ENCODE measurements at regions of chr11 and their contacts with region 1.

Region 1: DNA sequence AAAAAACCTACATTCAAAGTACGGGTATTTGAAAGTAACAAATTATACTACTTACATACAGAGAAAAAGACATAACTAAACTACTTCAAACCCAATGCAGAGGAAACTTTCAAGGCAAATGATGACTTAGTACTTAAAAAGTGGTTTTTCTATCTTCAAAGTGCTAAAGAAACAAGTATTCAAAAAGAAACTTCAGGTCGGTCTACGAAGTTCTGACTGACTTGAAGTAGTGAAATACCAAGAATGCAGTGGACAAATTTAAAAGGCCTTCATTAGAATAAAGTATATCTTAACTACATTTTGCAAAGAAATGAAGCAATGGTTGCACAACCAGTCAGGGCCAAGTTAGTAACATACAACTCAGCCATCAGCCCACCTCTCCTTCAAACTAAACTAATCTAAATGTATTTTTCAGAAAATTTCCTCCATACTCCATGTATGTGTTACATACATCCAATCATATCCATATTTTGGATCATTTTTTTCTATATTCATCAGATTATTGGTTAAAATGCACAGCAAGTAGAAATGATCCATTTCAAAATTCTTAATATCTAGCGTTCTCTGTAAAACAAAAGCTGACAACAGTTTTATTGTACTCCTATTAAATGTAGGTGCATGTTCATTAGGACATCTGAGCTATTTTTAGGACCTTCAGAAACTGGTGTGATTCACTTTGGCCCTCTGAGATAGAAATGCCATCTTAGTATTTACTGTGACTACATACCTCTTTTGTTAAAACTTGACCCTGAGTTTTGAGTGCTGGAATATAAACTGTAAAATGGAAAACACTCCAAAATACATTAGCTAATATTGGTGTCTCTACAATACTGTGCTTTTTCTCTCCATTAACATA is 49.9 kb downstream of the BIRC2 start:
- DNase-seq: no peak
- H3K4me3 Mint-ChIP-seq: no peak overlapping the region
- H3K27ac Mint-ChIP-seq: peak overlapping the region; percentile 69
- H3K4me1 Mint-ChIP-seq: peaks cover 32% of the 10 kb centered on the region
- H3K27me3 Mint-ChIP-seq: no peaks in the 10 kb centered on the region

Region 2: GRCh38 chr11:102323542-102324251 is 73.2 kb before region 1 on chr11:
- intact Hi-C with region 1: loop called (anchors 2 kb)
- DNase-seq: no peak
- H3K4me3 Mint-ChIP-seq: no peak overlapping the region
- H3K27ac Mint-ChIP-seq: no peak overlapping the region
- H3K4me1 Mint-ChIP-seq: peaks cover 47% of the 10 kb centered on the region
- H3K27me3 Mint-ChIP-seq: no peaks in the 10 kb centered on the region

Region 3: GRCh38 chr11:102346748-102347461 is 50.0 kb before region 1 on chr11 and contains the start of gene BIRC2:
- intact Hi-C with region 1: loop called (anchors 2 kb)
- DNase-seq: peak; percentile 99
- H3K4me3 Mint-ChIP-seq: peak within 1 kb of the TSS; percentile 99
- H3K27ac Mint-ChIP-seq: peak within 1 kb of the TSS; percentile 99
- H3K4me1 Mint-ChIP-seq: peaks cover 36% of the 10 kb centered on the region
- H3K27me3 Mint-ChIP-seq: no peaks in the 10 kb centered on the region
- total RNA-seq, gene BIRC2: 27.8 and 30.8 TPM in 2 replicates

Region 4: GRCh38 chr11:102416976-102417375 is 20.0 kb after region 1 on chr11:
- intact Hi-C with region 1: loop called (anchors 1 kb)
- DNase-seq: no peak
- H3K4me3 Mint-ChIP-seq: peak overlapping the region; percentile 53
- H3K27ac Mint-ChIP-seq: peak overlapping the region; percentile 80
- H3K4me1 Mint-ChIP-seq: peaks cover 73% of the 10 kb centered on the region
- H3K27me3 Mint-ChIP-seq: no peaks in the 10 kb centered on the region

Region 5: DNA sequence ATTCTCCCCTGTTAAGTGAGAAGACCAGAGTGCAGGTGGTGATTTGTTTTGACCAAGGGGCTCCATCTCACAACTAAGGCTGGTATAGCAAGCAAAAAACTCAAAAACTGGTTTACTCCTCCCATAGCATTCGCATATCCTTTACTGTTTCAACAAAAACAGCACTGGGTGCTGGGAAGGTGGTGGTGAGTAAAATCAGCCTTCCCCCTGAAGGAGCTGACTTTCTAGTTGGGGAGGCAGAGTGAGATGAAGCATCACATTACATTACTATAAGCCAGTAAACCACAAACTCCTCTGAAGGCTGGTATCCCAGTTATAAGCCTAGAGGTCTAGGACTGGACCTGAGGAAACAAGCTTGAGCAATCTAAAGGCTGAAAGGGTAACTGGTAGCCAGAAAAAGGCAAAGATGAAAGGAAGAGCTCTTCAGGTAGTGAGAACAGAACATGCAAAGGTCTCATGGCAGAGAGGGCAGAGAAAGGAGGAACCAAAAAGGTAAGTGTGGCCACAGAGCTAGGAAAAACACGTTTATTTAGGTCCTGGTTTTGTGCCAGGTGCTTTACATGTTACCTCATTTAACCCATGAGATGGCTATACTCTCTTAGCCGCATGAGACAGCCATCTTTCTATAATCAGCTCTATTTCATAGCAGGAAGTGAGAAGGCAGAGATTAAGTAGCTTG is 33.4 kb after region 1 on chr11:
- intact Hi-C with region 1: loop called (anchors 5 kb)
- DNase-seq: no peak
- H3K4me3 Mint-ChIP-seq: peak overlapping the region; percentile 38
- H3K27ac Mint-ChIP-seq: peak overlapping the region; percentile 87
- H3K4me1 Mint-ChIP-seq: peaks cover 52% of the 10 kb centered on the region
- H3K27me3 Mint-ChIP-seq: no peaks in the 10 kb centered on the region

Region 6: DNA sequence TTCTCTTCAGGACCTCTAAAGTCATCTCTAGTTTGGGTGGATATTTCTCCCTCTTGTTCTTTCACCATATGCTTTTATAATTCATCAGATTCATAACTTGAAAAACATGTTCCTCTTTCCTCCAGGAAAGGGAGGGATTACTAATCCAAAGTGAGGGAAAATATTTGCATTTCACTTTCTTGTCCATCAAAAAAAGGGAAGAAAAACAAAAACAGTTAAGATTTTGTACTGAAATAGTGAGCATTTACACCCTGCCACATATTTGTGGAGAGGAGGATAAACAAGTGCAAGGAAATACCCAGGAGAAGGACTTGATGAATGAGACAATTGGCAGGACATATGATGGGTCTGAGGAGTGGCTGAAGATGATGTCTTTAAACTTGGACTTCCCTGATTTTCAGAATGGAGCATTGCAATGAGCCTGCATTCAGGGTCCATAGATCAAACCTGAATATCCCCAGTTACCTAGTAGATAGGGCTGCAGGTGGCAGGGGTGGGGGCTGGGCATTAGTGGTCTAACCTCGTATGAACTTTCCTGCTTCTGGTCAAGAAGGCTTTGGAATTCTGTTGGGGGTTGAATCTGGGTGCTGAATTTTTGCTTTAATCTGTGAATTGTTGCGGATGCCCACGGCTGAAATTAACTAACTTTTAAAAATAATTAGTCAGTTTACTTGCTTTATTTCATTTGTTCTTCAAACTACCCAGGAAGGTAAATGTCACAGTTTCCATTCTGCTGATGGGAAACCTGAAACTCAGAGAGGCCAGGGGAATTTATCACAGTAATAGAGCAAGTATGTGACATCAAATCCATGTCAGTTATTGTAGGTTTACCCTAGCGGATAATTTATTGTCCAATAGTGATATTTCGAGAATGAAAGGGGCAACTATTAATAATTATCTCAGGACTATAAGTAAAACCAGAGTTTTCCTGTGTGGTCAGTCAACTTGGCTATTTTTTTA is 92.5 kb after region 1 on chr11:
- intact Hi-C with region 1: loop called (anchors 1 kb)
- DNase-seq: no peak
- H3K4me3 Mint-ChIP-seq: no peak overlapping the region
- H3K27ac Mint-ChIP-seq: no peak overlapping the region
- H3K4me1 Mint-ChIP-seq: peaks cover 54% of the 10 kb centered on the region
- H3K27me3 Mint-ChIP-seq: peaks cover 2% of the 10 kb centered on the region

Measured in activated CD4-positive, alpha-beta T cell treated with anti-CD3 and anti-CD28 coated beads, Interleukin-2, amount 10 ng/mL, durations not matched to agents 24 days and 14 days (primary cell).